ENCODE measurements at regions of chr4 and their contacts with region 1.

Region 1: DNA sequence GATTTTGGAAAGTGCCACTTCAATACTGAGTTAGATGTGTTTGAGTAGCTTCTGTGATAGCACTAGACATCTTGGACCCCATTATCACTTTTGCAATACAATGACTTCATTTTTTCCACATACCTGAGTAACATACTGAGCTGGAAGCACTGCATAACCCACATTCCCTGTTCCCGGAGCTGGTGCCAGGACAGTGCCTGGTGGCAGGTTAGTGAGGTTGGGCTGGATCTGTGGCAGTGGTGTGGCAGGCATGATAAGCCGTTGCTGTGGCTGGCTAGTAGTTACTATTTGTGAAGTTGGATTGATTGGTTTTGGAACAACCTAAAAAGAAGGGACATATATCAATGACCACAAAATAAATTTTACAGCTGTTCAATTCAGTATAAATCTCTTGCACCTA is 38.9 kb downstream of the THAP9 start:
- DNase-seq: no peak
- ATAC-seq: no peak
- H3K4me3 ChIP-seq: no peak overlapping the region
- H3K4me3 Mint-ChIP-seq: no peak overlapping the region
- H3K27ac ChIP-seq: no peak overlapping the region
- H3K27ac Mint-ChIP-seq: no peak overlapping the region
- H3K4me1 ChIP-seq: no peaks in the 10 kb centered on the region
- H3K4me1 Mint-ChIP-seq: no peaks in the 10 kb centered on the region
- H3K27me3 ChIP-seq: no peaks in the 10 kb centered on the region
- H3K27me3 Mint-ChIP-seq: no peaks in the 10 kb centered on the region

Region 2: DNA sequence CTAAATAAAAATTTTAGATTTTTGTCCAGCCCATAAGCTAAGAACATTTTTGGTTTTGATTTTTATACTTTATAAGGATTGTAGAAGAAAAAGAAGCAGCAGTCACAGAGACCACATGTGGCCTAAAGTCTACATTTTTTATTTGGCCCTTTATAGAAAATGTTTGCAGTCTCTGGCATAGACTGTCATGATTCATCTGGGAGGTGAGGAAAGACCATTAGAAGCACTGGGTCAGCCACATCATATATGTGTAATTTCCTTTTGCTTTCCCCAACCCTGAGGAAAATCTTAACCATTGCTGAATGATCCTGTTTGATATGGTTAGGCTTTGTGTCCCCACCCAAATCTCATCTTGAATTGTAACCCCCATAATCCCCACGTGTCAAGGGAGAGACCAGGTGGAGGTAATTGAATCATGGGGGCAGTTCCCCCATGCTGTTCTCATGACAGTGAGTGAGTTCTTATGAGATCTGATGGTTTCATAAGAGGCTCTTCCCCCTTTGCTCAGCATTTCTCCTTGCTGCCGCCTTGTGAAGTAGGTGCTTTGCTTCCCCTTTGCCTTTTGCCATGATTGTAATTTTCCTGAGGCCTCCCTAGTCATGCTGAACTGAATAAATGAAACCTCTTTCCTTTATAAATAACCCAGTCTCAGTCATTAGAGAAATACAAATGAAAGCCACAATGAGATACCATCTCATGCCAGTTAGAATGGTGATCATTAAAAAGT is 83.5 kb after region 1 on chr4:
- CTCF ChIA-PET with region 1: no interaction called
- POLR2A ChIA-PET with region 1: no interaction called
- DNase-seq: no peak
- ATAC-seq: no peak
- H3K4me3 ChIP-seq: no peak overlapping the region
- H3K4me3 Mint-ChIP-seq: no peak overlapping the region
- H3K27ac ChIP-seq: no peak overlapping the region
- H3K27ac Mint-ChIP-seq: no peak overlapping the region
- H3K4me1 ChIP-seq: no peaks in the 10 kb centered on the region
- H3K4me1 Mint-ChIP-seq: no peaks in the 10 kb centered on the region
- H3K27me3 ChIP-seq: peaks cover 0 to 7% of the 10 kb centered on the region in 2 experiments
- H3K27me3 Mint-ChIP-seq: no peaks in the 10 kb centered on the region

Region 3: DNA sequence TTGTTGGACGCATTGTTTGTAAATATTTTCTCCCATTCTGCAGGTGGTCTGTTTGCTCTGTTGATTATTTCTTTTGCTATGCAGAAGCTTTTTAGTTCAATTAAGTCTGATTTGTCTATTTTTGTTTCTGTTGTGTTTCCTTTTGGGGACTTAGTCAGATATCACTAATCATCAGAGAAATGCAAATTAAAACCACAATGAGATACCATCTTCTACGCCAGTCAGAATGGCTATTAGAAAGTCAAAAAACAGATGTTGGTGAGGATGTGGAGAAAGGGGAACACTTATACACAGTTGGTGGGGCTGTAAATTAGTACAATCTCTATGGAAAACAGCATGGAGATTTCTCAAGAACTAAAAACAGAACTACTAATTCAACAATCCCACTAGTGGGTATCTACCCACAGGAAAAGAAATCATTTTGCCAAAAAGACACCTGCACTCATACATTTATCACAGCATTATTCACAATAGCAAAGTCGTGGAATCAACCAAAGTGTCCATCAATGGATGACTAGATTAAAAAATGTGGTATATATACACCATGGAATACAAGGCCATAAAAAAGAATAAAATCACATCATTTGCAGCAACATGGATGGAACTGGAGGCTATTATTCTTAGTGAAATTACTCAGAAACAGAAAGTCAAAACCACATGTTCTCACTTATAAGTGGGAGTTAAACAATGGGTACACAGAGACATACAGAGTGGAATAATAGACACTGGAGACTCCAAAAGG is 337.1 kb after region 1 on chr4:
- CTCF ChIA-PET with region 1: no interaction called
- POLR2A ChIA-PET with region 1: interaction called in 1 of 2 experiments, 20 read pairs
- DNase-seq: no peak
- ATAC-seq: peak in 2 of 4 experiments; percentile 35 to 51
- H3K4me3 ChIP-seq: no peak overlapping the region
- H3K4me3 Mint-ChIP-seq: no peak overlapping the region
- H3K27ac ChIP-seq: no peak overlapping the region
- H3K27ac Mint-ChIP-seq: no peak overlapping the region
- H3K4me1 ChIP-seq: no peaks in the 10 kb centered on the region
- H3K4me1 Mint-ChIP-seq: peaks cover 16 to 31% (median 18%) of the 10 kb centered on the region in 3 donors
- H3K27me3 ChIP-seq: no peaks in the 10 kb centered on the region
- H3K27me3 Mint-ChIP-seq: no peaks in the 10 kb centered on the region